H1 (cell line): ENCODE measurements at regions of chr17 and their contacts with region 1.

Region 1: GRCh38 chr17:49230636-49231562 is at the start of gene PHOSPHO1:
- DNase-seq: peak; percentile 73 to 96
- H3K4me3 ChIP-seq: peak within 1 kb of the TSS; percentile 69 to 82 (median 76)
- H3K27ac ChIP-seq: no peak within 1 kb of the TSS
- H3K4me1 ChIP-seq: peaks cover 0 to 2% (median 0%) of the 10 kb centered on the region in 4 experiments; a peak in 1 of 7 replicates
- H3K27me3 ChIP-seq: peaks cover 7 to 41% (median 32%) of the 10 kb centered on the region in 4 experiments; a peak in 6 of 7 replicates
- CTCF ChIP-seq: no peak
- EP300 ChIP-seq: no peak
- POLR2A ChIP-seq: no peak
- RAD21 ChIP-seq: no peak
- total RNA-seq, gene PHOSPHO1: 0.34 and 0.73 TPM in 2 replicates

Region 2: GRCh38 chr17:49053171-49053829 is 177.6 kb before region 1 on chr17:
- CTCF ChIA-PET with region 1: interaction called, 11 read pairs
- POLR2A ChIA-PET with region 1: interaction called, 7 read pairs
- DNase-seq: peak in 1 of 2 experiments; percentile 55
- H3K4me3 ChIP-seq: no peak overlapping the region
- H3K27ac ChIP-seq: no peak overlapping the region
- H3K4me1 ChIP-seq: peaks cover 10 to 23% (median 19%) of the 10 kb centered on the region in 4 experiments
- H3K27me3 ChIP-seq: no peaks in the 10 kb centered on the region
- CTCF ChIP-seq: no peak
- EP300 ChIP-seq: no peak
- POLR2A ChIP-seq: peak; percentile 34 to 58; a peak in 2 of 3 replicates
- RAD21 ChIP-seq: peak in 1 of 2 experiments; percentile 22; a peak in 1 of 4 replicates

Region 3: GRCh38 chr17:49180303-49180702 is 50.6 kb before region 1 on chr17:
- CTCF ChIA-PET with region 1: interaction called, 17 read pairs
- POLR2A ChIA-PET with region 1: no interaction called
- DNase-seq: peak in 1 of 2 experiments; percentile 89
- H3K4me3 ChIP-seq: no peak overlapping the region
- H3K27ac ChIP-seq: no peak overlapping the region
- H3K4me1 ChIP-seq: no peaks in the 10 kb centered on the region
- H3K27me3 ChIP-seq: no peaks in the 10 kb centered on the region
- CTCF ChIP-seq: peak; percentile 60 to 93 (median 75)
- EP300 ChIP-seq: no peak
- POLR2A ChIP-seq: no peak
- RAD21 ChIP-seq: peak; percentile 77 to 81

Region 4: DNA sequence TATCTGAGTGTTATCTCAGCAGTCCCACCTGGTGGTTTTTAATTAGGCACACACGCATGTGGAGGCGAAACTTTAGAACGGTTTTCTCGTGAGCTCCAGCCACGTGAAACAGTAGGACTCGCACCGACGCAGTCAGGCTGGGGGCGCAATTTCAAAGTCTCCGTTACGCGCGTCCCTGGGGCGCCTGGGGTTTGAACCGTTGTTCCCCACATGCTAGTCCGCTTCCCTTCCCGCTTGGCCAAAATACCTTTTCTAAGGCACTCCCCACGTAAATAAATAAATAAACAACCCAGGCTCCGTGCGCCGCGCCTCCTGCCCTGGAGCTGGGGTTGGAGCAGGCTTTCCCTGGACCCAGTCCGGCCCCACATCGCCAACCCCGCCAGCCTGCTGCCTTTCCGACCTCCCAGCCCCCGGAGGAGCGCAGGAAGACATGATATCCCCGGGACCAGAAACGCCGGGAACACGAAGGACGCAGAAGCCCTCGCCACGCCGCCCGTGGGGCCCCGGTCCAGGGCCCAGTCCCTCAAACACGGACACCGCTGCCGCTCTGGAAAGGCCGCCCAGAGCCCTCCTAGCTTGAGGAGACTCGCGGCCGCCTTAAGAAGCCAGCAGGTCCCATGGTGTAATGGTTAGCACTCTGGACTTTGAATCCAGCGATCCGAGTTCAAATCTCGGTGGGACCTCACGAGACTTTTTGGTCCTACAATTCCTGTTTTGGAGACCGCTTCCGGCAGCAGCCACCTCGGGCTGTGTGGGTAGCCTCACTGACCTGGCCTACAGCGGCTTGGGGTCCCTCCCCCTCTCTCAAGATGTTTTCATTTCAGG is 38.8 kb before region 1 on chr17:
- CTCF ChIA-PET with region 1: interaction called, 43 read pairs
- POLR2A ChIA-PET with region 1: interaction called, 13 read pairs
- DNase-seq: peak; percentile 70 to 99
- H3K4me3 ChIP-seq: peak overlapping the region; percentile 78 to 97 (median 95)
- H3K27ac ChIP-seq: peak overlapping the region; percentile 82; the same call in 1 of the 2 replicates
- H3K4me1 ChIP-seq: peaks cover 0 to 3% (median 1%) of the 10 kb centered on the region in 4 experiments; a peak in 1 of 7 replicates
- H3K27me3 ChIP-seq: no peaks in the 10 kb centered on the region
- CTCF ChIP-seq: peak in 2 of 3 experiments; percentile 3 to 23; a peak in 2 of 4 replicates
- EP300 ChIP-seq: no peak
- POLR2A ChIP-seq: peak in 1 of 2 experiments; percentile 35; a peak in 2 of 3 replicates
- RAD21 ChIP-seq: no peak

Region 5: GRCh38 chr17:49201481-49201927 is 29.4 kb before region 1 on chr17:
- CTCF ChIA-PET with region 1: interaction called, 43 read pairs
- POLR2A ChIA-PET with region 1: interaction called, 3 read pairs
- DNase-seq: no peak
- H3K4me3 ChIP-seq: no peak overlapping the region
- H3K27ac ChIP-seq: no peak overlapping the region
- H3K4me1 ChIP-seq: no peaks in the 10 kb centered on the region
- H3K27me3 ChIP-seq: no peaks in the 10 kb centered on the region; a peak in 1 of 7 replicates
- CTCF ChIP-seq: no peak
- EP300 ChIP-seq: no peak
- POLR2A ChIP-seq: no peak
- RAD21 ChIP-seq: no peak

Region 6: GRCh38 chr17:49217651-49218413 is 13.1 kb before region 1 on chr17:
- CTCF ChIA-PET with region 1: interaction called, 42 read pairs
- POLR2A ChIA-PET with region 1: interaction called, 6 read pairs
- DNase-seq: no peak
- H3K4me3 ChIP-seq: no peak overlapping the region
- H3K27ac ChIP-seq: no peak overlapping the region
- H3K4me1 ChIP-seq: peaks cover 0 to 9% (median 4%) of the 10 kb centered on the region in 4 experiments; a peak in 4 of 7 replicates
- H3K27me3 ChIP-seq: peaks cover 0 to 10% (median 4%) of the 10 kb centered on the region in 4 experiments; a peak in 5 of 7 replicates
- CTCF ChIP-seq: no peak
- EP300 ChIP-seq: no peak
- POLR2A ChIP-seq: no peak
- RAD21 ChIP-seq: no peak

Region 7: GRCh38 chr17:49252148-49253034 is 21.5 kb after region 1 on chr17:
- CTCF ChIA-PET with region 1: interaction called, 19 read pairs
- POLR2A ChIA-PET with region 1: no interaction called
- DNase-seq: no peak
- H3K4me3 ChIP-seq: no peak overlapping the region
- H3K27ac ChIP-seq: no peak overlapping the region
- H3K4me1 ChIP-seq: no peaks in the 10 kb centered on the region; a peak in 1 of 7 replicates
- H3K27me3 ChIP-seq: no peaks in the 10 kb centered on the region
- CTCF ChIP-seq: no peak
- EP300 ChIP-seq: no peak
- POLR2A ChIP-seq: no peak
- RAD21 ChIP-seq: no peak

Region 8: GRCh38 chr17:49299996-49300395 is 69.1 kb after region 1 on chr17:
- CTCF ChIA-PET with region 1: no interaction called
- POLR2A ChIA-PET with region 1: no interaction called
- DNase-seq: no peak
- H3K4me3 ChIP-seq: no peak overlapping the region
- H3K27ac ChIP-seq: no peak overlapping the region
- H3K4me1 ChIP-seq: no peaks in the 10 kb centered on the region
- H3K27me3 ChIP-seq: no peaks in the 10 kb centered on the region
- CTCF ChIP-seq: no peak
- EP300 ChIP-seq: no peak
- POLR2A ChIP-seq: no peak
- RAD21 ChIP-seq: no peak

Region 9: DNA sequence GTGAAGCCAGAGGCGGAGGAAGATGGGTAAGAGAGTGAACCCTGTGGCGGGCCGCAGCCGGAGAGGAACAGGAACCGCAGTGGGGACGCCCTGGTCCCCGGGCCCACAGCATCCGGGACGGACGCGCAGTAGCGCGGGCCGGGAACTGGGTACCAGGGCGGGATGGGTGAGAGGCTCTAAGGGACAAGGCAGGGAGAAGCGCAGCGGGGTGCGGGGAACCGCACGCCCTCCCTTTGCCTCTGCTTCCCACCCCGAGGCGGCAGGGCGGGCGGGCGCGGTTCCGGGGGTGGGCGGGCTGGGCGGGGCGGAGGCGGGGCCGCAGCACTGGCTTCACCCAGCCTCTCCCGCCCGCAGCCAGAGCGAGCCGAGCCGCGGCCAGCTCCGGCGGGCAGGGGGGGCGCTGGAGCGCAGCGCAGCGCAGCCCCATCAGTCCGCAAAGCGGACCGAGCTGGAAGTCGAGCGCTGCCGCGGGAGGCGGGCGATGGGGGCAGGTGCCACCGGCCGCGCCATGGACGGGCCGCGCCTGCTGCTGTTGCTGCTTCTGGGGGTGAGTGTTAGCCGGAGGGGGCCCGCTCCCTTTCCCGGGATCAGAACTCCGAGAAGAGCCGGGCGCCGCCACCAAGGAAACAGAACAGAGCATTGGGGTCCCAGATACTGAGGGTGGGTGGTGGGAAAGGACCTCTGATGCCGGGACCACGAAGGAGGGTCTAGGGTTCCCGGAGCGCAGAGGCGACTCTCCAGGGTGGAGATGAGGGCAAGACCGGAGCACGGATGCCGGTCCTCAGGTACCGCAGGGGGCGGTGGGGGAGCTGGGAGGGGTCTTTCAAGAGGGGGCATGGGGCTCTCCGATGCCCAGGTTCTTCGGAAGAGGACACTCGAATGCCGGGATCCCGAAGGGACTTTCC is 264.3 kb after region 1 on chr17 and contains the start of gene NGFR:
- CTCF ChIA-PET with region 1: no interaction called
- POLR2A ChIA-PET with region 1: no interaction called
- DNase-seq: peak in 1 of 2 experiments; percentile 79
- H3K4me3 ChIP-seq: peak within 1 kb of the TSS; percentile 57 to 79 (median 72)
- H3K27ac ChIP-seq: no peak within 1 kb of the TSS
- H3K4me1 ChIP-seq: peaks cover 3 to 11% (median 7%) of the 10 kb centered on the region in 4 experiments
- H3K27me3 ChIP-seq: peaks cover 12 to 47% (median 38%) of the 10 kb centered on the region in 4 experiments
- CTCF ChIP-seq: no peak
- EP300 ChIP-seq: no peak
- POLR2A ChIP-seq: peak in 1 of 2 experiments; percentile 61; a peak in 2 of 3 replicates
- RAD21 ChIP-seq: peak in 1 of 2 experiments; percentile 3; a peak in 1 of 4 replicates
- total RNA-seq, gene NGFR: 8.1 TPM in 2 replicates